Posterior vena cava (tissue), 2 donors: ENCODE measurements at regions of chr13 and their contacts with region 1.

Region 1: DNA sequence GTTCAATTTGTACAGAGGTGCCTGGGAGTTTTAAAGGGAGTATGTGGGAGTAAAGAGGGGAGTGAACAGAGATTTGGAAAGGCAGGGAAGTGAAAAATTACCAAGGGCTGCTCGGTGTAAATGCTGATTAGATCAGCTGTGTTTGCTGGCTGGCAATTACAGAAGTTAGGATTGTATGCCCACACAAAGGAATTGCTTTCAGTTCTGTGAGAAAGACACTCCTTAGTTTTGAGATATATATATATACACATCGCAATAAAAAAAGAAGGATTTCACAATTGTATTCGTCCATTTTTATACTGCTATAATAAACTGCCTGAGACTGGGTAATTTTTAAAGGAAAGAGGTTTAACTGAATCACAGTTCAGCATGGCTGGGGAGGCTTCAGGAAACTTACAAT is 196.3 kb downstream of the SLITRK5 start:
- DNase-seq: no peak

Region 2: GRCh38 chr13:86155756-86156155 is 1711.7 kb before region 1 on chr13:
- intact Hi-C with region 1: no loop called
- DNase-seq: no peak

Region 3: GRCh38 chr13:88704600-88705275 is 837.3 kb after region 1 on chr13:
- intact Hi-C with region 1: loop called in 1 of 2 experiments (anchors 5 kb)
- DNase-seq: no peak